Lower leg skin (tissue), 4 donors: ENCODE measurements at regions of chr4 and their contacts with region 1.

Region 1: GRCh38 chr4:142696334-142697122 is 149.6 kb downstream of the INPP4B start:
- DNase-seq: no peak
- H3K4me3 ChIP-seq: no peak overlapping the region
- CTCF ChIP-seq: no peak
- POLR2A ChIP-seq: no peak

Region 2: DNA sequence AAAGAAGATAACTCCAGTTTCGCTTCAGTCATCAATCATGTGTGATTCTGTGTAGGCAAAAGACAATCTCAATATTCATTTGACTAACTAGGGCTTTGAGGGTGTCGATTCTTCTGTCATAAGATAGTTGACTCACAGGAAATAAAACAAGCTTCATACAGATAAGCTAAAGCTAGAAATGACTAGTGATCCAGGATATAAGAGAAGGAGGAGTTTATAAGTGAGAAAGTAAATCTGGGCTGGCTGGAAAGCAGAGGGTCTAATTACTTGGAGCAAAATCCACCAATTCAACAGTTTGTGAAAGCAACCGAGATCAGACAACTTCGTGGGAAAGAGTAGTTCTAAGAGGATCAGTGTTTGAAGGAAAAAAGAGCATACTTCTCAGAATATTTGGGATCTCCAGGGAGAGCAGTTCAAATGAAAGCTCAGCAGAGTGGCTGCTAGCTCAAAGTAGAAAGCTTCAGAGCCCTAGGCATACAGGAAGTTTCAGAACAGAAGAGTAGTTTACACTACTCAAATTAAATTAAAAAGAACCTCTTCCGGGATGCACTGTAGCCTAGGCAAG is 279.7 kb before region 1 on chr4:
- intact Hi-C with region 1: no loop called
- DNase-seq: no peak
- H3K4me3 ChIP-seq: no peak overlapping the region
- CTCF ChIP-seq: no peak
- POLR2A ChIP-seq: no peak

Region 3: DNA sequence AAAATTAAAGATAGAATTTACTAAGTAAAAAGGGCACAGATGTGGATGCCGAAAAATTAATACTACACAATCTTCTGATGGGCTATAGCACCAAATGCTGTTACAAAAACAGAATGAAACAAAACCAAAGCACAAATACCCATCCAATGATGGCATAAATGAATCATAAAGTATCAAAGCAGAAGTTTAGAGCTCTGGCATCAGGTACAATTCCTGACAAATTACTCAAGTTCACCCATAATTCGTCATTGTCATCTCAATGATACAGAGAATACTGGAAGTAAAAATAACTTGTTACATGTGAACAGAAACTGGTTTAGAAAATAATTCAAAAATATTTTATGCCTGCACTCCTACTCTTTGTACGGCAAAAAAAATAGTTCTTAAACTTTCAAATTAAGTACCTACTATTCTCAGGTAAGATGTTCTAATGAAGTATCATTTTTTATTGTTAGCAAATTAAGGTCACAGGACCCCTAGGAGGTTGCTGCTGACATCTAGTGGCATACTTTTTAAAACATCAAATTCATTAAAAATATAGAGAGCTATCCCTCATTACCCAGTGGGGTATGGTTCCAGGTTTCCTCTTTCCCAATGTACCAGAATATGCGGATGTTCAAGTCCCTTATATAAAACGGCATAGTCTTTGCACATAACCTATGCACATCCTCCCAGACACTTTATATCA is 23.5 kb after region 1 on chr4:
- intact Hi-C with region 1: loop called (anchors 2 kb)
- DNase-seq: no peak
- H3K4me3 ChIP-seq: no peak overlapping the region
- CTCF ChIP-seq: no peak
- POLR2A ChIP-seq: no peak